GM18951 (cell line): ENCODE measurements at regions of chr5 and their contacts with region 1.

Region 1: GRCh38 chr5:53095931-53096525 is 13.5 kb downstream of the MOCS2 start:
- POLR2A ChIP-seq: no peak

Region 2: DNA sequence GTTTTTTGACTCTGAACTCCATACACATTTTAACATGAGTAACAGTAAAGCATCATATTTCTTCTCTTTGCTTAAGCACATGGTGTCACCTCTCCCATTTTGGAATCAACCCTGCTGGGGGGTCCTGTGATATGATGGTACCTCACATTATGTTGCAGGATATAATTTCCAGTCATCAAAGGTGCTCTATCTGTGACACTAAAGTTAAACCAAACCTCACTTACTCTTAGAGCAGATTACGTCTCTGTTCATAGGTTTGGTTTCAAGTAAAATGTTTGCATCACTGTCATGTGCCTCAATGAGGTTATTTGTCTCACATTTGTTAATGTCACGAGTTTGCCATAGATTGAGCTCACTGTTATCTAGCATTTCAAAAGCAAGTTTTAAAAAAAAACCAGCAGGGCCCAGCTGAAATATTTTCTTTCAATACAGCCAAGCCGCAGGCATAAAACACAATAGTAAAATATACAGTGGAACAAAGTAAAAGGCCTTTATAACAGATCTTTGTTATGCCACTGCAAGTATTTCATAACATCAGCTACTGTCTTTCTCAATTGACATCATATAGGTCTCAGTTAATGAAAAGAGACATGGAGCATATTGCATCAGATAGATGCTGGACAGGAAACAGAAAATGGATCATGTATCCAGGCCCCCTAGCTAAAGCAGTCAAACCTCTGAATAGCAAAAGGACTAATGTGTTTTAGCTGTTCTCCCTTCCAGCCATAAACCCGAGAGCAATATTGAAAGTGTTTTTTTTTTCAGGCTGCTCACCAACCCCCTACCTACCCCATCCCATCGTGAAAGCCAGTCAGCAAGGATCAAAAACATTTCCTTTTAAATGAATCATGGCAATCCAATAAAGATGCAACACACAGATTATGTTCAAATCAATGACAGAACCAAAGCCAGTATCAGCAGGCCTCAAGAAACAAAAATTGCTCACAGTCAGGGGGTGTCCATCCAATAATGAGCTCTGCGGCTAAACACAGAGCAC is 490.4 kb before region 1 on chr5:
- in situ Hi-C with region 1: no loop called
- POLR2A ChIP-seq: no peak

Region 3: DNA sequence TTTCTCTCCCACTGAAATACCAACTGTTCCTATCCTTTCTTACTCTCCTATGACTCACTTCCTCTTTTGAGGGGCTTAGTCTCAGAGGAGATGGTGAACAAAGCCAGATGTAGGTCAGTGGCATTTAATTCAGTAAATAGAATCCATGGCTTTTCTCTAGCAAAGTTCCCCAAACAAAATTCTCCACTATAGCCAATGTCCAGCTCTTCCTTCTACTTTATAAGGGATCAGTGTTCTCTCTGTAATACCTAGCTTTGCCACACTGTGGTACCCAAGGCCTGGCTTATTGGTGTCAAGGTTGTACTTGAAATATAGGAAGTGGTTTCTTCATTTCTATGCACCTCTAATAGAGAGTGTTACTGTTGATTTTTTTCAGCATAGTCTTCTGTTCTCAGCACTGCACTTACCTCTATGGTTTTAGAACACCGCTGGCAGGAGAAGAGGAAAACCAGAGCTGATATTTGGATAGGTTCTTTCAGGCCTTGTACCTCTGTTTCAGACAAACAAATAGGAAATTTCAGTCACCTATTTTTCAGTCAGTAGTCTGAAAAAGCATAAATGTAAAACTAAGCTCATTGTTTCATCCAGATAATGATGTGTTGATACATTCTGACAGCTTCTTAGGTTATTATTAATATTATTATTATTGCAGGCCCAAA is 147.5 kb before region 1 on chr5:
- in situ Hi-C with region 1: loop called (anchors 10 kb)
- POLR2A ChIP-seq: no peak

Region 4: GRCh38 chr5:53191548-53192165 is 95.6 kb after region 1 on chr5:
- in situ Hi-C with region 1: no loop called
- POLR2A ChIP-seq: no peak